Activated T-helper 2 cell treated with anti-CD3 and anti-CD28 coated beads, Interferon-gamma antibody, Interleukin-2, Interleukin-4, amounts not matched to agents 10 μg/mL and 5 μg/mL and 100 μg/mL, durations not matched to agents 14 hours and 24 hours and 36 hours (primary cell): ENCODE measurements at regions of chr10 and their contacts with region 1.

Region 1: GRCh38 chr10:49606981-49607535 is 3.1 kb upstream of the SLC18A3 start:
- DNase-seq: peak; percentile 75
- H3K4me3 Mint-ChIP-seq: no peak overlapping the region
- H3K27ac Mint-ChIP-seq: no peak overlapping the region
- H3K4me1 Mint-ChIP-seq: peaks cover 5% of the 10 kb centered on the region
- H3K27me3 Mint-ChIP-seq: peaks cover 47% of the 10 kb centered on the region

Region 2: GRCh38 chr10:49398000-49398861 is 208.8 kb before region 1 on chr10:
- intact Hi-C with region 1: loop called (anchors 1 kb)
- DNase-seq: peak; percentile 47
- H3K4me3 Mint-ChIP-seq: no peak overlapping the region
- H3K27ac Mint-ChIP-seq: no peak overlapping the region
- H3K4me1 Mint-ChIP-seq: peaks cover 5% of the 10 kb centered on the region
- H3K27me3 Mint-ChIP-seq: peaks cover 77% of the 10 kb centered on the region

Region 3: GRCh38 chr10:49761789-49762565 is 154.9 kb after region 1 on chr10 and contains the start of gene OGDHL:
- intact Hi-C with region 1: loop called (anchors 2 kb)
- DNase-seq: peak; percentile 51
- H3K4me3 Mint-ChIP-seq: peak within 1 kb of the TSS; percentile 51
- H3K27ac Mint-ChIP-seq: no peak within 1 kb of the TSS
- H3K4me1 Mint-ChIP-seq: no peaks in the 10 kb centered on the region
- H3K27me3 Mint-ChIP-seq: peaks cover 10% of the 10 kb centered on the region
- total RNA-seq, gene OGDHL: 3.7 and 3.9 TPM in 2 replicates

Region 4: DNA sequence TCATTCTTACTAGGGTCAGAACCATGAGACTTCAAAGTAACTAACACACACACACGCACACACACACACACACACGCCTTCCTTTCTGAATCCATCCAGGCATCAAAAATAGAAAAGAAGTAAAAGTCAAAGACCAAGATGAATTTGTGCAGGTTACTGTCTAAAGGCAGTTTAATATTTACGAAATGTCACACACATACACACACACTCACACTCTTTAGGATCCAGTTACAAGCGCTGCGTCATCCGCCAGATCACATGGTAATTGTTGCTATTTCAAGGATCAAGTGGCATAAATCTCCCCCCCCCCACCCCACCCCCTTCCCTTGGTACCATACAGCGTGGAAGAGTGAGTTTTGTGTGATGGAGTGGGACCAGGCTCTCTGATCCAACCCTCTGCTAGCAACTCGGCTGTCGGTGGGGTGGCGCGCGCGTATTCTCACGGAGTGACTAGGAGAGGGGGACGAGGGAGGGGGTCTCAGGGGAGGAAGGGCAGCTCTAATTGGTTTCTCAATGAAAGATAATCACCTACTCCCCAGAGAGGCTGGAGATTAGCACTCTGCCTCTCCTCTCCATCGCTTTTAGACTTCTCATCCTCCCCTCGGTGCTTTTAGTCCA is 1383.6 kb after region 1 on chr10:
- intact Hi-C with region 1: loop called (anchors 5 kb)
- DNase-seq: no peak
- H3K4me3 Mint-ChIP-seq: no peak overlapping the region
- H3K27ac Mint-ChIP-seq: no peak overlapping the region
- H3K4me1 Mint-ChIP-seq: no peaks in the 10 kb centered on the region
- H3K27me3 Mint-ChIP-seq: peaks cover 42% of the 10 kb centered on the region